Activated B cell treated with CpG ODN at 0.5 μM for 24 hours (primary cell): ENCODE measurements at regions of chr14 and their contacts with region 1.

Region 1: GRCh38 chr14:35826218-35826951 is at the start of gene BRMS1L:
- DNase-seq: peak; percentile 90
- ATAC-seq: peak; percentile 96
- H3K4me3 Mint-ChIP-seq: peak within 1 kb of the TSS; percentile 87
- H3K27ac Mint-ChIP-seq: peak within 1 kb of the TSS; percentile 92
- H3K4me1 Mint-ChIP-seq: peaks cover 19% of the 10 kb centered on the region
- H3K27me3 Mint-ChIP-seq: no peaks in the 10 kb centered on the region
- CTCF ChIP-seq: no peak
- total RNA-seq, gene BRMS1L: 3.7 and 4.4 TPM in 2 replicates

Region 2: GRCh38 chr14:34461334-34462131 is 1364.9 kb before region 1 on chr14:
- CTCF ChIA-PET with region 1: no interaction called
- POLR2A ChIA-PET with region 1: no interaction called
- intact Hi-C with region 1: loop called (anchors 1 kb)
- DNase-seq: no peak
- ATAC-seq: no peak
- H3K4me3 Mint-ChIP-seq: peak overlapping the region; percentile 88
- H3K27ac Mint-ChIP-seq: peak overlapping the region; percentile 76
- H3K4me1 Mint-ChIP-seq: peaks cover 15% of the 10 kb centered on the region
- H3K27me3 Mint-ChIP-seq: no peaks in the 10 kb centered on the region
- CTCF ChIP-seq: no peak

Region 3: DNA sequence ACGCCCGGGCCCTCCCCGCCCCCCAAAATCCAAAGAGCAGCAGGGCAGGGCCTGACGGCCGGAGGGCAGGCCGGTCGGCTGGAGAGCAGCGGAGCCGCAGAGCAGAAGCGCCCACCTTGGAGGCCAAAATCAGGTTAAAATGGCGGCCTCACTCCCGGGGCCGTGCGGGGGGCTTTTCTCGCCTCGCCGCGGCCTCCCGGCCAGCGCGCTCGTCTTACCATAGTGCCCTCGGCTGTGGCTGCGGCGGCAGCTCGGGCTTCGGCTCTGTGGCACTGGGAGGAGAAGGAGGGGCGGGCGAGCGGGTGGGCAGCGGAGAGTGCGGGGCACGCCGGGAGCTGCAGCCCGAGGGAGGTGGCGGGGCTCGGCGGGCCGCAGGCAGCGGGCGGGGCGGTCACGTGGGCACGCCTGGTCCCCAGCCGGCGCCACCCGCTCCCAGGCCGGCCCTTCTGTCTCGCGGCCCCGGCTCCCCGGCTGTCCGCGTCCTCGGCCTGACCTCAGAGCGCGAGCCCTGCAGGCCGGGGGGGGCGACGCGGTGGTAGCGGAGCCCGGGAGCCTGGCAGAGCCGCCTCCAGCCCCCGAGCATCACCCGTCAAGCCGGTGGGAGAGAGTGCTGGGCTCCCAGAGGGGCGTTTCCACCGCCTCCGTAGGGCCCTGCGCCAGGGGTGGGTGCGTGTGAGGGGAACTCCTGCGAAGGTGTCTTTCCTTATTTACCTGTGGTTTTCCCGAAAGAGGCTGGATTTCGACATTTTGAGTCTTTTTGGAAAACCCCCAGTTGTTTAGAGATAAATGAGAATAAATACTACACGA is 1111.9 kb before region 1 on chr14 and contains the start of gene CFL2:
- CTCF ChIA-PET with region 1: no interaction called
- POLR2A ChIA-PET with region 1: no interaction called
- intact Hi-C with region 1: loop called (anchors 10 kb)
- DNase-seq: peak; percentile 80
- ATAC-seq: peak; percentile 90
- H3K4me3 Mint-ChIP-seq: peak within 1 kb of the TSS; percentile 92
- H3K27ac Mint-ChIP-seq: peak within 1 kb of the TSS; percentile 89
- H3K4me1 Mint-ChIP-seq: peaks cover 32% of the 10 kb centered on the region
- H3K27me3 Mint-ChIP-seq: no peaks in the 10 kb centered on the region
- CTCF ChIP-seq: no peak
- total RNA-seq, gene CFL2: 19.1 and 20.8 TPM in 2 replicates

Region 4: DNA sequence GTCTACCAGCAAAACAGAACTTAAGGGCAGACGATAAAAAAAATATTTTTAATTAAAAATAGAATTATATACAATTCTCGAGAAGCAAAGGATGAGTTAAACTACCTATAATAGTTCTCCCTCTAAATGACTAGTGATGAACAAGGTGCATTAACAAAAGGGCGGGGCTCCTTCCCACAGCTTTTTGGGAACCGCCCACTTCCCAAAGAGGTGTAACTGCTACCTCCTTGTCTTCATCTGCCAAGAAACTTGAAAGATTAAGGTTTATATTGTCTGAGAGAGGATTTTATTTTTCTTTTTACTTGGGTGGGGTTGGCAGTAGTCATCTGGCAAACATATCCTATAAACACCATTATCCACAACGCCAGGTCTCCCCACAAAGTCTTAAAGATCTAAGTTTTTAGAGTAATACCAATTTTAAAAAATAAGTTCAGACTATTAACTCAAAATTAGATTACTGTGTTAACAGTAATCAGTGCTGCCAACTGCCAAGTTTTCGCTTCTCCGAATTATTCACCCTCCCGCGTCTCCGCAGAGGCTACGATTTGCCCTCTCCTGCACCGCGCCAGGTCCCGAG is 18.2 kb before region 1 on chr14:
- CTCF ChIA-PET with region 1: interaction called, 12 read pairs
- POLR2A ChIA-PET with region 1: interaction called, 28 read pairs
- intact Hi-C with region 1: loop called (anchors 1 kb)
- DNase-seq: no peak
- ATAC-seq: no peak
- H3K4me3 Mint-ChIP-seq: peak overlapping the region; percentile 95
- H3K27ac Mint-ChIP-seq: peak overlapping the region; percentile 87
- H3K4me1 Mint-ChIP-seq: peaks cover 31% of the 10 kb centered on the region
- H3K27me3 Mint-ChIP-seq: no peaks in the 10 kb centered on the region
- CTCF ChIP-seq: no peak

Region 5: GRCh38 chr14:36320200-36320896 is 494.0 kb after region 1 on chr14 and contains the start of gene MBIP:
- CTCF ChIA-PET with region 1: no interaction called
- POLR2A ChIA-PET with region 1: interaction called, 3 read pairs
- intact Hi-C with region 1: loop called (anchors 1 kb)
- DNase-seq: peak; percentile 55
- ATAC-seq: peak; percentile 99
- H3K4me3 Mint-ChIP-seq: peak within 1 kb of the TSS; percentile 97
- H3K27ac Mint-ChIP-seq: peak within 1 kb of the TSS; percentile 89
- H3K4me1 Mint-ChIP-seq: peaks cover 23% of the 10 kb centered on the region
- H3K27me3 Mint-ChIP-seq: peaks cover 15% of the 10 kb centered on the region
- CTCF ChIP-seq: no peak
- total RNA-seq, gene MBIP: 17.0 and 21.7 TPM in 2 replicates